ENCODE measurements at regions of chr9 and their contacts with region 1.

Region 1: DNA sequence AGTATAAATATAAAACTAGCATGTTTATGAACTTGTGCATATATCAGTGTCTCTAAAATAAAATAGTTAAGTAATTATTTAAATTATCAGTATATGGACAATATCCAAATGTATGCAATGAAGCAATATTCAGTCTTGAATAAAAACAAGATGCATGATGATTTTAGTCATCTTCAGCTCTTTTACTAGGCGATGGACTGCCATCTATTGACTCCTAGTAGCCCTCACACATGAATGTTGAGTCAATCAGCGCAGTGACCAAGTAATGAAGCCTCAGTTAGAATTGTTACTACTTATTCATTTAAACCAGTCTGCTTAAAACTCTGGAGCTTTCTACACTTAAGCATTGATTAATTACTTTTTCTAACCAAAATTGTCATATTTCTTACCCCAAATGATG is 92.9 kb upstream of the GRHPR start:
- DNase-seq: peak; percentile 81
- H3K4me3 ChIP-seq: no peak overlapping the region
- H3K27ac ChIP-seq: no peak overlapping the region
- H3K4me1 ChIP-seq: peaks cover 96% of the 10 kb centered on the region
- H3K27me3 ChIP-seq: no peaks in the 10 kb centered on the region
- CTCF ChIP-seq: peak; percentile 72

Region 2: DNA sequence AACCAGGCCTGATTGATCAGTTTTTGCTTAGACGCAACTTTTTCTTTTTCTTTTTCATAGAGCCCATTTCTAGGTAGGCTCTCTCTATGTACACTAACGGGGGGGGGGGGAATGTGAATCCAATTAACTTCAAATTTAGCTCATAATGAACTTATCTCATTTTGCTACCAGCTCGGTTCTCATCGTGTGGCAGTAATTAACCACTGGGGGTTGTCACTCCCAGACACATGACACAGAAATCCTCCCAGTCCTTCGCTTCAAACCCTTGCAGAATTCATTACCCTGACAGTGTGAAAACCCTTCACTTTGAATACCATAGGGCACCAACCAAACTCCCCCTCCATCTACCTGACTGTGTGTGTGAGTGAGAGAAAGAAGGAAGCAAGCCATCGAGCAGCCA is 439.7 kb before region 1 on chr9:
- CTCF ChIA-PET with region 1: interaction called, 12 read pairs
- POLR2A ChIA-PET with region 1: no interaction called
- intact Hi-C with region 1: no loop called
- DNase-seq: no peak
- H3K4me3 ChIP-seq: no peak overlapping the region
- H3K27ac ChIP-seq: no peak overlapping the region
- H3K4me1 ChIP-seq: no peaks in the 10 kb centered on the region
- H3K27me3 ChIP-seq: no peaks in the 10 kb centered on the region
- CTCF ChIP-seq: no peak

Region 3: GRCh38 chr9:36995927-36996705 is 333.5 kb before region 1 on chr9:
- CTCF ChIA-PET with region 1: interaction called, 12 read pairs
- POLR2A ChIA-PET with region 1: no interaction called
- intact Hi-C with region 1: loop called (anchors 1 kb)
- DNase-seq: peak; percentile 89
- H3K4me3 ChIP-seq: no peak overlapping the region
- H3K27ac ChIP-seq: no peak overlapping the region
- H3K4me1 ChIP-seq: peaks cover 19% of the 10 kb centered on the region
- H3K27me3 ChIP-seq: no peaks in the 10 kb centered on the region
- CTCF ChIP-seq: peak; percentile 89

Region 4: GRCh38 chr9:37119907-37120842 is 209.4 kb before region 1 on chr9 and contains the start of gene ZCCHC7:
- CTCF ChIA-PET with region 1: no interaction called
- POLR2A ChIA-PET with region 1: interaction called, 11 read pairs
- intact Hi-C with region 1: no loop called
- DNase-seq: peak; percentile 97
- H3K4me3 ChIP-seq: peak within 1 kb of the TSS; percentile 96
- H3K27ac ChIP-seq: peak within 1 kb of the TSS; percentile 97
- H3K4me1 ChIP-seq: peaks cover 17% of the 10 kb centered on the region
- H3K27me3 ChIP-seq: no peaks in the 10 kb centered on the region
- CTCF ChIP-seq: no peak
- total RNA-seq, gene ZCCHC7: 26.0 and 27.9 TPM in 2 replicates

Region 5: GRCh38 chr9:37382161-37382981 is 52.8 kb after region 1 on chr9:
- CTCF ChIA-PET with region 1: no interaction called
- POLR2A ChIA-PET with region 1: no interaction called
- intact Hi-C with region 1: loop called (anchors 2 kb)
- DNase-seq: no peak
- H3K4me3 ChIP-seq: no peak overlapping the region
- H3K27ac ChIP-seq: peak overlapping the region; percentile 84
- H3K4me1 ChIP-seq: peaks cover 33% of the 10 kb centered on the region
- H3K27me3 ChIP-seq: no peaks in the 10 kb centered on the region
- CTCF ChIP-seq: no peak

Region 6: GRCh38 chr9:37485389-37486219 is 156.0 kb after region 1 on chr9 and contains the start of gene POLR1E:
- CTCF ChIA-PET with region 1: no interaction called
- POLR2A ChIA-PET with region 1: no interaction called
- intact Hi-C with region 1: no loop called
- DNase-seq: peak; percentile 96
- H3K4me3 ChIP-seq: peak within 1 kb of the TSS; percentile 76
- H3K27ac ChIP-seq: peak within 1 kb of the TSS; percentile 83
- H3K4me1 ChIP-seq: peaks cover 21% of the 10 kb centered on the region
- H3K27me3 ChIP-seq: no peaks in the 10 kb centered on the region
- CTCF ChIP-seq: no peak
- total RNA-seq, gene POLR1E: 55.1 and 68.8 TPM in 2 replicates

Region 7: DNA sequence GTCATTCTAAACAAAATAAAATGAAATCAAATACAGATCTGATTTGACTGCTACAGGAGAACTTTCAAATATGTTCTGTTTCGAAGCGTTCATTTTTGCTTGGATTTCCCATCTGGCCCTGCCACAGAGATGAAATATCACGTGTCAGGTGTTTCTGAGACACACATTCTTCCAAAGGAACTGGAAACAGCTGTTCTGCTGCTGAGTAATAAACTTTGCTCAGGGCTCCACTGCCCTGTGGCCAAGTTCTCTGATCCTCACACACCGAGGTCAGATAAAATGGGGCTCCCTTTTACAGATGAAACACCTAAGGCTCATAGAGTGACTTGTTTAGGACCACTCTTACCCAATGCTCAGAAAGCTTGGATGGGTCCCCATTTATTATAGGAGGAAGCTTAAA is 363.7 kb after region 1 on chr9:
- CTCF ChIA-PET with region 1: no interaction called
- POLR2A ChIA-PET with region 1: no interaction called
- intact Hi-C with region 1: no loop called
- DNase-seq: no peak
- H3K4me3 ChIP-seq: no peak overlapping the region
- H3K27ac ChIP-seq: no peak overlapping the region
- H3K4me1 ChIP-seq: no peaks in the 10 kb centered on the region
- H3K27me3 ChIP-seq: peaks cover 82% of the 10 kb centered on the region
- CTCF ChIP-seq: no peak